Sciatic nerve (tissue), 2 donors: ENCODE measurements at regions of chr7 and their contacts with region 1.

Region 1: GRCh38 chr7:5237286-5237685 is 45.5 kb upstream of the SLC29A4 start:
- DNase-seq: peak; percentile 84
- ATAC-seq: peak; percentile 86

Region 2: GRCh38 chr7:5484921-5485320 is 247.6 kb after region 1 on chr7:
- intact Hi-C with region 1: loop called (anchors 2 kb)
- DNase-seq: no peak
- ATAC-seq: no peak